ENCODE measurements at regions of chr5 and their contacts with region 1.

Region 1: DNA sequence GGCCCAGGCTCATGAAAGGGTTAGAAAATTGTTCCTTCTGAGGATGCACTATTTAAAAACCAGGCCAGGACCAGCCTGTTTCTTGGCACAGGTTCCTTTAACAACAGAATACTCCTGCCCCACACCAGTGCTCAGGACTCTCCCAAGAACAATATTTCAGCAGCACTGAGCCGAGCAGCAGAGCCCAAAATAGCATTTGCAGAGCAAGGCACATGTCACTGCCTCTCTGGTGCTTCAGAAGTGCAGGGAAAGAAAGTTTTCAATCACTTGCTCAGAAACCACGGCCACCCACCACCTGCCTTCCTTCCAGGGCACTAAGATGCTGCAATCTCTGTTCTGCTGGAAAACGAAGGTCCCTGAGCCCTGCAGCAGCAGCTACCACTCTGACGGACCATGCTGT is 77.6 kb downstream of the SIL1 start:
- DNase-seq: no peak
- H3K4me3 ChIP-seq: no peak overlapping the region
- H3K27ac ChIP-seq: no peak overlapping the region
- H3K4me1 ChIP-seq: no peaks in the 10 kb centered on the region
- H3K27me3 ChIP-seq: no peaks in the 10 kb centered on the region

Region 2: GRCh38 chr5:139131465-139131864 is 10.9 kb after region 1 on chr5:
- CTCF ChIA-PET with region 1: interaction called, 11 read pairs
- POLR2A ChIA-PET with region 1: no interaction called
- DNase-seq: peak in 2 of 3 donors; percentile 17 to 51
- H3K4me3 ChIP-seq: no peak overlapping the region
- H3K27ac ChIP-seq: no peak overlapping the region
- H3K4me1 ChIP-seq: peaks cover 0 to 30% (median 18%) of the 10 kb centered on the region in 4 experiments
- H3K27me3 ChIP-seq: no peaks in the 10 kb centered on the region

Measured in common myeloid progenitor, CD34-positive (primary cell).